ENCODE measurements at regions of chr15 and their contacts with region 1.

Region 1: GRCh38 chr15:53453253-53454105 is 306.0 kb downstream of the WDR72 start:
- DNase-seq: peak; percentile 100
- ATAC-seq: peak; percentile 82
- H3K4me3 ChIP-seq: peak overlapping the region in 1 of 3 experiments; percentile 14; a peak in 1 of 6 replicates
- H3K27ac ChIP-seq: peak overlapping the region; percentile 97
- H3K4me1 ChIP-seq: peaks cover 91% of the 10 kb centered on the region
- H3K27me3 ChIP-seq: no peaks in the 10 kb centered on the region
- CTCF ChIP-seq: peak; percentile 21
- EP300 ChIP-seq: peak; percentile 97 to 100
- POLR2A ChIP-seq: peak; percentile 40 to 68
- RAD21 ChIP-seq: no peak; the same call in 1 of the 2 replicates

Region 2: DNA sequence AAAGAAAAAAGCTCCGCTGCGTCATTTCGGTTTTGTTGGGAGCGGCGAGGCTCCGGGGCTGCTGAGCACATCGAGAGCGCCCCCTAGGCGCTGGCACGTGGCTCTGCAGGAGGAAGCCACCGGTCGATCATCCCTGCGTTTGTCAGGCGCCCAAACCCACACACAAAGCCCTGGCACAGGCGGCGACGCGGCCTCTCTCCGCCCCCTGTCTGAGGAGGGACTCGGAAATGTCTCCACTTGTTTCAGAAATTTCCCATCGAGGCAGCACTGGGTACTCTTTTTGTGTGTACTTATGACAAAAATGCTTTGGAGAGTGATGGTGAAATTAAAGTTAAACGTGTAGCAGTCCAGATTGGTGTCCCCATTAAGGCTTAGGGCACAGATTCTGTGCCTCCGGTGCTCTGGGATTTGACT is 256.0 kb before region 1 on chr15:
- CTCF ChIA-PET with region 1: no interaction called
- POLR2A ChIA-PET with region 1: no interaction called
- in situ Hi-C with region 1: no loop called
- intact Hi-C with region 1: loop called (anchors 10 kb)
- DNase-seq: peak; percentile 44
- ATAC-seq: peak; percentile 95
- H3K4me3 ChIP-seq: peak overlapping the region in 1 of 3 experiments; percentile 26; a peak in 1 of 6 replicates
- H3K27ac ChIP-seq: no peak overlapping the region
- H3K4me1 ChIP-seq: peaks cover 7% of the 10 kb centered on the region
- H3K27me3 ChIP-seq: no peaks in the 10 kb centered on the region
- CTCF ChIP-seq: peak; percentile 90
- EP300 ChIP-seq: peak in 1 of 2 experiments; percentile 16; a peak in 1 of 4 replicates
- POLR2A ChIP-seq: no peak
- RAD21 ChIP-seq: peak; percentile 90

Region 3: DNA sequence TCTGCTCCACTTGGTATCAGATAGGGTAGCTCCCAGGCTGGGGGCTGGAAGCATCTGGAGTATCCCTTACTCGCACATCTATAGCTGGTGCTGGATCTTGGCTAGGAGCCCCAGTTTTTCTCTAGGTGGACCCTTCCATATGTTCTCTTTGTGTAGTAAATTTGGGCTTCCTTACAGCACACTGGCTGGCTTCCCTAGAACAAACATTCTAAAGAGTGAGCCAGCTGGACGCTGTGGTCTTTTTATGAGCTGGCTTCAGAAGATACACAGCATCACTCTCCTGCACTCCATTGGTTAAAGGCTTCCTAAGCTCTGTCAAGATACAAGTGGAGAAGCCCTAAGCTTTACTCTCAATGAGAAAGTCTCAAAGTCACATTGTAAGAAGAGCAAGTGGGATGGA is 16.1 kb before region 1 on chr15:
- CTCF ChIA-PET with region 1: no interaction called
- POLR2A ChIA-PET with region 1: interaction called, 33 read pairs
- in situ Hi-C with region 1: no loop called
- intact Hi-C with region 1: loop called (anchors 1 kb)
- DNase-seq: no peak
- ATAC-seq: no peak
- H3K4me3 ChIP-seq: no peak overlapping the region
- H3K27ac ChIP-seq: no peak overlapping the region
- H3K4me1 ChIP-seq: peaks cover 72% of the 10 kb centered on the region
- H3K27me3 ChIP-seq: no peaks in the 10 kb centered on the region
- CTCF ChIP-seq: no peak
- EP300 ChIP-seq: no peak
- POLR2A ChIP-seq: no peak
- RAD21 ChIP-seq: no peak

Region 4: GRCh38 chr15:53716909-53717876 is 263.7 kb after region 1 on chr15:
- CTCF ChIA-PET with region 1: no interaction called
- POLR2A ChIA-PET with region 1: no interaction called
- in situ Hi-C with region 1: no loop called
- intact Hi-C with region 1: loop called (anchors 10 kb)
- DNase-seq: peak; percentile 20
- ATAC-seq: peak; percentile 48; the same call in 1 of the 3 replicates
- H3K4me3 ChIP-seq: no peak overlapping the region
- H3K27ac ChIP-seq: no peak overlapping the region
- H3K4me1 ChIP-seq: peaks cover 6% of the 10 kb centered on the region
- H3K27me3 ChIP-seq: no peaks in the 10 kb centered on the region
- CTCF ChIP-seq: peak; percentile 68
- EP300 ChIP-seq: no peak
- POLR2A ChIP-seq: no peak
- RAD21 ChIP-seq: no peak